AG04449 (cell line): ENCODE measurements at regions of chr2 and their contacts with region 1.

Region 1: DNA sequence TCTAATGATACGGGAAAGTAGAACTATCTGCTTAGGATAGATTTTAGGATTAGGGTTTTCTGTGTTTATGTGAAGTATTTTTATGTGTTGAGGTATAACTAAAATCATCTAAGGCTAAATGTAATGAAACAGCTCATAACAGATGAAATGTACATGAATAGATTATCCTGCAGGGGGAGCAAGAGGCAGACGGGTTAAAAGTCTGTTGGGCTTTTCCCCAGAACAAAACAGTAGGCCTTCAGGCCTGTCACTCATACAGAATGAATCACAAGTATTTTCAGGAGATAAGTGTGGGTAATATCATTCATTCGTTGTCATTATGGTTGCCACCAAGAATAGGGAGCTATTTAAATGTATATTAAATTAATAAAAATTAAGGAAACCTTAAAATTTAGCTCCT is 107.9 kb upstream of the IL1R2 start:
- DNase-seq: no peak
- H3K4me3 ChIP-seq: no peak overlapping the region
- CTCF ChIP-seq: peak; percentile 49

Region 2: DNA sequence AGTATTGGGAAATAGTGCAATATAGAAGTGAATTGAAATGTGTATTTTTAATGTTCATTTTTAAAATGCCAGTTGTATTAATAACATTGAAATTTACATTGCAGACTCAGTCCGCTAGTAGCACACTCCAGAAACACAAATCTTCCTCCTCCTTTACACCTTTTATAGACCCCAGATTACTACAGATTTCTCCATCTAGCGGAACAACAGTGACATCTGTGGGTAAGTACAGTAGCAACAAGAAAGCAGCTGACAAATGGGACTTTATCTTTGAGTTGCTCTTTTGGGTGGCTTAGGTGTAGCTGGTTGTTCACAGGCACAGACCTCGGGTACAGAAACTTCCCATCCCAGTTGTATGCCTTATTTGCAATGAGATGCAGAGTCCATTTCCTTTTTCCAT is 10.3 kb before region 1 on chr2:
- CTCF ChIA-PET with region 1: interaction called, 21 read pairs
- POLR2A ChIA-PET with region 1: no interaction called
- DNase-seq: no peak
- H3K4me3 ChIP-seq: no peak overlapping the region
- CTCF ChIP-seq: no peak

Region 3: GRCh38 chr2:101900375-101900774 is 16.5 kb after region 1 on chr2:
- CTCF ChIA-PET with region 1: interaction called, 40 read pairs
- POLR2A ChIA-PET with region 1: no interaction called
- DNase-seq: no peak
- H3K4me3 ChIP-seq: no peak overlapping the region
- CTCF ChIP-seq: no peak

Region 4: GRCh38 chr2:102005989-102006885 is 122.4 kb after region 1 on chr2:
- CTCF ChIA-PET with region 1: interaction called, 10 read pairs
- POLR2A ChIA-PET with region 1: no interaction called
- DNase-seq: no peak
- H3K4me3 ChIP-seq: no peak overlapping the region
- CTCF ChIP-seq: peak; percentile 64

Region 5: DNA sequence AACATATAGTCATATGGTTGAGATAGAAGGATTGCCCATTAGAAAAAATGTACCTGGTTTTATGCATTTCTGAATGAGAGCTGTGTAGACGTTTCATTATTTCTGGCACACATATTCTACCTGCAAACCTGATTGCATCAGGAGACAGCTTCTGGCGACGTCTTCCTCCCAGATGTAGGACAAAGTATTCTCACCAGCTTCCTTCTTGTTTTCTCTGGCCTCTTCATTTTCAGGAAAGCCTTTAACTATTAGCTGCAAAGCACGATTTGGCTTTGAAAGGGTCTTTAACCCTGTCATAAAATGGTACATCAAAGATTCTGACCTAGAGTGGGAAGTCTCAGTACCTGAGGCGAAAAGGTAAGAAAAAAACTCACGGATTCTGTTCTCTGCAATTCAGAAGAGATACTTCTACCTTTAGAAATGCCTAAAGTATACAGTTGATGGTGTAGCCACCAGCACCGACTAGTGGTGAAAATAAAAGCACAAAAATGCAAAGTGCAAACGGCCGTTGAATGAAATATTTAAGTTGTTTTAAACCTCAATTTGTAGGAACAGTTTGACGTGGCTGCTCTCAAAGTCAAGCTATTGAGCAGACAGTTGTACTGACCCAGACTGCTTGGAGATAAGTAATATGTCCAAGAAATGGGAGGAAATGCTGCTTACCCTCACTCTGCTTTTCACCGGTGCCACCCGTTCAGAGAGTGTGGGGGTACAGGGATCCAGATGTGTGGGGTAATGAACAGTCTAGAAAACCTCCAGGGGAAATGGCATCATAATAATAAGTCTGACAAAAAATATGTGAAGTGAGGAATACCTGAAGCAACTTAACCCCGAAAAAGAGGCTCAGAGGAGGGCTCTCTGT is 559.3 kb after region 1 on chr2:
- CTCF ChIA-PET with region 1: interaction called, 19 read pairs
- POLR2A ChIA-PET with region 1: no interaction called
- DNase-seq: no peak
- H3K4me3 ChIP-seq: no peak overlapping the region
- CTCF ChIP-seq: peak; percentile 41

Region 6: GRCh38 chr2:102449370-102449974 is 565.6 kb after region 1 on chr2:
- CTCF ChIA-PET with region 1: interaction called, 19 read pairs
- POLR2A ChIA-PET with region 1: no interaction called
- DNase-seq: no peak
- H3K4me3 ChIP-seq: no peak overlapping the region
- CTCF ChIP-seq: peak; percentile 52